ENCODE measurements at regions of chr1 and their contacts with region 1.

Region 1: DNA sequence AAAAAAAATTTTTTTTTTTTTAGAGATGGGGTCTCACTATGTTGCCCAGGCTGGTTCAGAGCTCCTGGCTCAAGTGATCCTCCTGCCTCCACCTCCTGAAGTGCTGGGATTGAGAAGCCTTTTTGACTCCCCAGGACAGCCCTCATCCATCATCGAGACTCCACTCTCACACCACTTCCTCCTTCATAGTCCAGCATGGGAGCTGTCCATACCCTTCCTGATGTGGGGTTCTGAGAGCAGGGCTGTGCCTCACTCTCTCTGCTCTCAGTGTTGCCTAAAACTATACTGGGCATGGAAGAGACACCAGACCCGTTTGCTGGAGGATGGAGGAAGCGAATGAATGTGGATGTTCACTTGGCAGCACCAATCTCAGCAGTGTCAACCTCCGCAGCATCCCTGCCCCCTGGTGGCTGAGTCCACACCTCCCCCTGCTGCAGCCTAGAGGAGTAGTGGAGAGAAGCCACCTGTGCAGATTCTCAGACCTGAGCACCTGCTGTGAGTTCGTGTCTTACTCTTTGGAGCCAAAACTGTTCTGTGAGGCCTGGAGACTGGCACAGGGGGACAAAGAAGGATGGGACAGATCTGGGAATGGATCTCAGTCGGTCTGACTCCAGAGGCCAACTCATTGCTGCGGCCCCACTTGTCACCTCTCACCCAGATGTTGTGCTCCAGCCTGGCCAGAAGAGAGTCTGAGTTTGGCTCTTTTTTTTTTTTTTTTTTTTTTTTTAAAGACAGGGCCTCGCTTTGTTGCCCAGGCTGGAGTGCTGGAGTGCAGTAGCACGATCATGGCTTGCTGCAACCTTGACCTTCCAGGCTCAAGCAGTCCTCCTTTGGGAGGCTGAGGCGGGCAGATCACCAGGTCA is 17.7 kb downstream of the TINAGL1 start:
- DNase-seq: peak; percentile 67 to 70
- ATAC-seq: peak; percentile 94 to 98
- H3K4me3 ChIP-seq: no peak overlapping the region
- H3K27ac ChIP-seq: no peak overlapping the region
- H3K4me1 ChIP-seq: peaks cover 12% of the 10 kb centered on the region; the same call in 2 of the 3 replicates
- CTCF ChIP-seq: peak; percentile 79
- EP300 ChIP-seq: no peak
- POLR2A ChIP-seq: no peak
- RAD21 ChIP-seq: peak; percentile 80 to 87

Region 2: DNA sequence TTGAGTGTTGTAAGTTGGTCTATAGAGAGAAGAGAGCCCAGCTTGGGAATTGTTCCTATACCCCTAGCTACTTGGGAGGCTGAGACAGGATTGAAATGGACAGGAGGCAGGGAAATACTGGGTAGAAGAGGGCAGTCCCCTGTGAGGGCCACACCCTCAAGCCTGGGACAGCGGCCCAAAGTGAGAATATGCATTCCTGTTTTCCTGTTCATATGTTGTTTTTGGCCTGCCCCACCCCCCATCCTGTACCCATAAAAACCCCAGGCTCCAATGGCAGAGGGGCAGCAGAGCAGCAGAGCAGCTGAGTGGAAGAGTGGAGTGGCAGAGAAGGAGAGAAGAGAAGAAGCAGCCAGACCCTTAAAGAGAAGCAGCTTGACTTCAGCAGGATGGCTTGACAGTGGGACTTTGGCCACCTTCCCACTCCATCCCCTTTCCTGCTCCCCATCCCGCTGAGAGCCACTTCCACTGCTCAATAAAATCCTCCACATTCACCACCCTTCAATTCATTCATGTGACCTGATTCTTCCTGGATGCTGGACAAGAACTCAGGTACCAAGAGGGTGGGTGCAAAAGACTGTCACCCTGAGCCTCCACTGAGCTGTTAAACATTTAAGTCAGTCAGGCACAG is 457.9 kb before region 1 on chr1:
- CTCF ChIA-PET with region 1: no interaction called
- POLR2A ChIA-PET with region 1: no interaction called
- DNase-seq: no peak
- ATAC-seq: peak in 1 of 2 experiments; percentile 36; a peak in 2 of 6 replicates
- H3K4me3 ChIP-seq: no peak overlapping the region
- H3K27ac ChIP-seq: no peak overlapping the region
- H3K4me1 ChIP-seq: no peaks in the 10 kb centered on the region
- CTCF ChIP-seq: no peak
- EP300 ChIP-seq: no peak
- POLR2A ChIP-seq: no peak
- RAD21 ChIP-seq: no peak

Region 3: GRCh38 chr1:31372961-31373896 is 220.8 kb before region 1 on chr1 and contains the start of gene FABP3:
- CTCF ChIA-PET with region 1: no interaction called
- POLR2A ChIA-PET with region 1: no interaction called
- DNase-seq: no peak
- ATAC-seq: no peak
- H3K4me3 ChIP-seq: no peak within 1 kb of the TSS
- H3K27ac ChIP-seq: no peak within 1 kb of the TSS
- H3K4me1 ChIP-seq: peaks cover 13% of the 10 kb centered on the region
- CTCF ChIP-seq: no peak
- EP300 ChIP-seq: no peak
- POLR2A ChIP-seq: no peak
- RAD21 ChIP-seq: no peak
- polyA plus RNA-seq, gene FABP3: not detected in 2 replicates

Region 4: GRCh38 chr1:31564134-31564989 is 29.6 kb before region 1 on chr1:
- CTCF ChIA-PET with region 1: interaction called, 252 read pairs
- POLR2A ChIA-PET with region 1: no interaction called
- DNase-seq: peak; percentile 44 to 62
- ATAC-seq: peak; percentile 88 to 90
- H3K4me3 ChIP-seq: no peak overlapping the region
- H3K27ac ChIP-seq: peak overlapping the region in 1 of 2 experiments; percentile 51; a peak in 1 of 6 replicates
- H3K4me1 ChIP-seq: peaks cover 25% of the 10 kb centered on the region
- CTCF ChIP-seq: peak; percentile 81
- EP300 ChIP-seq: no peak
- POLR2A ChIP-seq: no peak
- RAD21 ChIP-seq: peak; percentile 88 to 92

Region 5: DNA sequence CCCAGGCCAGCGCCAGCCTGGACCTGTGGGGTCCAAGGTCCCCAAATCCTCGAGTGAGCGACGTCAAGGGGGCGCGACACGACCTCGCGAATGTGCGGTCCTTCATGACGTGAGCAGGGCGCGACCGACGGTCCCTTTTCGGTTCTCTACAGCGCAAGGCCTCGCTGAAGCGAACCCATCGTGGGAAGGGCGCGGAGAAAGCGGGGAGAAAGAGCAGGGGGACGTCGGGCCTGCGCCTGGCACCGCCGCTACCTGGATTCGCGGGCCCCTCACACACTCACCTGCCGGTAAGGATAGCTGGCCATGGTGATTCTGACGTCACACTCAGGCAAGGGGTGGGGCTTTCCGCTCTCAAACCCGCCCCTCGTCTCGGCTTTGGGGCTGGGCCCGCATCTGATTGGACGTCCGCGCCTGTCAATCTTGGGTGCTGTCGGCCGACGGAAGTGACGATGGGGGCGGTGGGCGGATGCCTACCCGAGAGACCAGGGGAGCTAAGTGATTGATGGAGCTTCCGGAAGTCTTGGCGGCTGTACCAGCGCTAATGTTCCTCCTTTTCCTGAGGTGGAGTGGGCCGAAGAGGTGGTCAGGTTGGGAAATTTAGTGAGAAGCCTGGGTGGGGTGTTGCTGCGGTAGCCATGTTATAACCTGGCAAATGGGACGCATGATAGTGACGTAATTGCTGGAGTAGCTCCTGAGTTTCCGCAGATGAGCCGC is 50.7 kb after region 1 on chr1 and contains the start of gene PEF1:
- CTCF ChIA-PET with region 1: no interaction called
- POLR2A ChIA-PET with region 1: no interaction called
- DNase-seq: peak; percentile 95 to 98
- ATAC-seq: peak; percentile 91 to 96
- H3K4me3 ChIP-seq: peak within 1 kb of the TSS; percentile 77
- H3K27ac ChIP-seq: peak within 1 kb of the TSS; percentile 97 to 98
- H3K4me1 ChIP-seq: peaks cover 15% of the 10 kb centered on the region
- CTCF ChIP-seq: no peak
- EP300 ChIP-seq: no peak
- POLR2A ChIP-seq: peak; percentile 15; the same call in 1 of the 2 replicates
- RAD21 ChIP-seq: no peak
- polyA plus RNA-seq, gene PEF1: 47.6 and 62.9 TPM in 2 replicates

Region 6: GRCh38 chr1:31663622-31664452 is 69.8 kb after region 1 on chr1:
- CTCF ChIA-PET with region 1: no interaction called
- POLR2A ChIA-PET with region 1: no interaction called
- DNase-seq: peak; percentile 30 to 74
- ATAC-seq: peak; percentile 49 to 66; a peak in 5 of 6 replicates
- H3K4me3 ChIP-seq: no peak overlapping the region
- H3K27ac ChIP-seq: peak overlapping the region in 1 of 2 experiments; percentile 91; a peak in 3 of 6 replicates
- H3K4me1 ChIP-seq: peaks cover 33% of the 10 kb centered on the region
- CTCF ChIP-seq: peak; percentile 76
- EP300 ChIP-seq: no peak
- POLR2A ChIP-seq: no peak
- RAD21 ChIP-seq: peak; percentile 95 to 96